Activated CD4-positive, alpha-beta memory T cell treated with anti-CD3 and anti-CD28 coated beads, Interleukin-2, amount 10 ng/mL, durations not matched to agents 7 days and 5 days (primary cell): ENCODE measurements at regions of chr10 and their contacts with region 1.

Region 1: GRCh38 chr10:73857446-73857845 is 16.9 kb downstream of the CAMK2G start:
- DNase-seq: peak; percentile 67
- H3K4me3 Mint-ChIP-seq: peak overlapping the region; percentile 52
- H3K27ac Mint-ChIP-seq: peak overlapping the region; percentile 79
- H3K4me1 Mint-ChIP-seq: peaks cover 73% of the 10 kb centered on the region
- H3K27me3 Mint-ChIP-seq: no peaks in the 10 kb centered on the region

Region 2: DNA sequence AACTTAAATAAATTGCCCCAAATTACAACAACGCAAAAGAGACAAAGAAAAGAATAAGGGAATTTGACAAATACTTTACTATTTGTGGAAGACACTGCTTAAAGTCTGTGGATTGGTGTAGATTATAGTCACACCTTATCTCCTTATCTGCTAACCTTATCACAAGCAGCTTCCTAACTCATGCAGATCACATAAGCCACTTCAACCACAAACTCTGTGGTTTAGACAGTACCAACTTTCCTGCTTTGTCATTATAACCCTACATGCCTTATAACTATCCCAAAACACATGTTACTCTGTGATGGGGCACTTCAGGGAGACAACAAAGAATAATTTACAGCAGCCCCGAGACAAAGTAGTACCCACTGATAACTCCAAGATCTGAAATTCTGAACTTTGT is 320.2 kb before region 1 on chr10:
- CTCF ChIA-PET with region 1: no interaction called
- POLR2A ChIA-PET with region 1: no interaction called
- DNase-seq: no peak
- H3K4me3 Mint-ChIP-seq: no peak overlapping the region
- H3K27ac Mint-ChIP-seq: no peak overlapping the region
- H3K4me1 Mint-ChIP-seq: peaks cover 16% of the 10 kb centered on the region
- H3K27me3 Mint-ChIP-seq: no peaks in the 10 kb centered on the region

Region 3: GRCh38 chr10:73874267-73875138 is 17.1 kb after region 1 on chr10 and contains the start of gene CAMK2G:
- CTCF ChIA-PET with region 1: interaction called, 350 read pairs
- POLR2A ChIA-PET with region 1: interaction called, 55 read pairs
- DNase-seq: peak; percentile 88
- H3K4me3 Mint-ChIP-seq: peak within 1 kb of the TSS; percentile 74
- H3K27ac Mint-ChIP-seq: peak within 1 kb of the TSS; percentile 54
- H3K4me1 Mint-ChIP-seq: peaks cover 57% of the 10 kb centered on the region
- H3K27me3 Mint-ChIP-seq: peaks cover 5% of the 10 kb centered on the region
- total RNA-seq, gene CAMK2G: 46.4 to 48.5 TPM